ENCODE measurements at regions of chr7 and their contacts with region 1.

Region 1: DNA sequence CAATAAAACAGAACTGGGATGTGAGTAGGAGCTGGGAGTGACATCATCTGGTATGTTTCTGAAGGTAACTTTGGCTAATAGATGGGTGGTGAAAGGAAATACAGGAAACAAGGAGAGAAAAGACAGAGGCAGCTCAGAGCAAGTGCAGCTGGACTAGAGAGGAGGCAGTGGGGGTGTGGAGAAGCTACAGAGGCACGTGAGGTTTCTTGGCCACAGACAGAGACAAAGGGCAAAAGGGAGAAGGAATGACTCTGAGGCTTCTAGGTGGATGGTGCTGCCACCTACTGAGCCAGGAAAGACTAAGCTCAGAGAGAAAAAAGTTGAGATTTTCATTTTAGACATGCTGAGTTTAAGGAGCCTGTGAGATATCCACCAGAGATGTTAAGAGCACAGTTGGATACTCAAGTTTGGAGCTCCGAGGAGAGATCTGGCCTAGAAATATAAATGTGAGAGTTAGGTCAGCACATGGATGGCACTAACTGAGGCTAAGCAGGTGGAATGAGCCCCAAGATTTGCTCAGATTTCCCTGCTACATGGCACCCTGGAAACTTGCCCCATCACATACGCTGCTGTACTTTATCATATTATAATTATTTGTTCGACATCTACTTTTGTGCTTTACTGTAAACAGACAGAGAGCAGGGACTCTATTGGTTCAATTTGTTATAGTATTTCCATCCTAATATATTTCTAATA is 293.0 kb upstream of the IMMP2L start:
- H3K4me3 ChIP-seq: no peak overlapping the region
- H3K27ac ChIP-seq: no peak overlapping the region
- H3K4me1 ChIP-seq: no peaks in the 10 kb centered on the region
- CTCF ChIP-seq: peak; percentile 26; the same call in 1 of the 2 replicates

Region 2: GRCh38 chr7:111752022-111752582 is 103.2 kb before region 1 on chr7:
- CTCF ChIA-PET with region 1: interaction called, 15 read pairs
- POLR2A ChIA-PET with region 1: no interaction called
- H3K4me3 ChIP-seq: no peak overlapping the region
- H3K27ac ChIP-seq: no peak overlapping the region
- H3K4me1 ChIP-seq: no peaks in the 10 kb centered on the region
- CTCF ChIP-seq: 0 out of 2 replicates have a peak, but pooled peaks have one; percentile 33

Region 3: DNA sequence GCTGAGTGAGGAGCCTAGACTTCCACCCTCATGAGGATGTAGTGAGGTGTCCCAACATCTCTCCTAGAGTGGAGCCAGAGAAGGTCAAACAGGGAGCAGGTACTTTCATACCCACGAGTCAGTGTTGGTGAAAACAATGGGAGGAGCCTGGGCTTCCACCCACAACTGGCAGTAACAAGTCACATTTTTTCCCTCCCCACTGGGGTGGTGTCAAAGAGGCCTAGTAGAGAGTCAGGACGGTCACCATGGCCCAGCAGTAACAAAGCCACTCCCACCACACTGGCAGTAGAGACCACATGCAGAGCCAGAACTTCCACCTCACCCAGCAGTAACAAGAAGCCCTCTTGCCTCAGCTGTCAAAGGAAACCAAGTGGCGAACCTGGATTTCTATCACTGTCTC is 12.8 kb before region 1 on chr7:
- CTCF ChIA-PET with region 1: interaction called, 16 read pairs
- POLR2A ChIA-PET with region 1: no interaction called
- H3K4me3 ChIP-seq: no peak overlapping the region
- H3K27ac ChIP-seq: no peak overlapping the region
- H3K4me1 ChIP-seq: no peaks in the 10 kb centered on the region
- CTCF ChIP-seq: no peak

Region 4: GRCh38 chr7:112322070-112322469 is 466.8 kb after region 1 on chr7:
- CTCF ChIA-PET with region 1: no interaction called
- POLR2A ChIA-PET with region 1: no interaction called
- H3K4me3 ChIP-seq: no peak overlapping the region
- H3K27ac ChIP-seq: no peak overlapping the region
- H3K4me1 ChIP-seq: no peaks in the 10 kb centered on the region
- CTCF ChIP-seq: no peak